Prostate gland (tissue), 2 donors: ENCODE measurements at regions of chr12 and their contacts with region 1.

Region 1: DNA sequence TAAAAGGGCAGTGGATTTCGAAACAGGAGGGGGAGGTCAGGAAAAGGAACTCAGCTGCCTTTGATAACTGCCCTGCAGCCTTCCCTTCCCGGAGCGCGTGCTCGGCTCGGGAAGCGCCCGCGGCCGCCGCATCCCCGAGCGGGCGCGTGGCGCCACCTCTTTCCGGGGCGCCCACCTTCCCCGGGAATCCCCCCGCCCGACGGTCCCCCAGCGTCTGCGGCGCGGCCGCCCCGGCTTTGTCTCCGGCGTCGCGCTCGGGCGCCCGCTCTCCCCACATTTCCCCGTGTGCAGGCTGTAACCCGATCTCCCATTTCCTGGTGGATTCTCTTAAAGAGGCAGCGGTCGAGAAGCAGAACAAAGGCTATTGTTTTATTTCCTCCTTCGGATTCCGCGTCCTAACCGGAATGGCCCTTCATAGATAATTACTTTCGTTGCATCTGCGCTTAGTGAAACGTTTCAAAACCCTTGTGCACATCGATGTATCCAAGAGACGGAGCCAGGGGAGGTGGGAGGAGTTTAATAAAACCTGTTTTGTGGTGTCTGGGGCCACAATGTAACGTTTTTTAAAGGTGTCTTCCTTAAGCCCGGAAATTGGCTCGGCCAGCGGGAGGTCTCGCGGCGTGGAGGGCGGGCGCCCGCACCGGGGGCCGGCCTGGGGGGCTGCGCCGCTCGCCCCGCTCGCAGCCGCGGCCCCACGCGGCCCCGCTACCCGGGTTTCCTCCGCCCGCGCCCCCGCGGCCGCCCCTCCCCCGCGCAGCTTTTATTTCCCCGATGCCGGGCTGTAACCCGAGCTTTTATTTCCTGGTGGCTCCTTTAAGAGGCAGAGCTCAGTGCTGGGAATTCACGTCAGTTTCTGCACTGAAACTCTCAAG is at the start of gene ETV6:
- DNase-seq: peak; percentile 76
- H3K4me3 ChIP-seq: peak within 1 kb of the TSS; percentile 73 to 77
- H3K27ac ChIP-seq: peak within 1 kb of the TSS; percentile 93 to 94
- H3K4me1 ChIP-seq: peaks cover 2% of the 10 kb centered on the region
- H3K27me3 ChIP-seq: no peaks in the 10 kb centered on the region
- CTCF ChIP-seq: no peak
- POLR2A ChIP-seq: peak; percentile 17
- total RNA-seq, gene ETV6: 26.7 to 33.6 TPM

Region 2: GRCh38 chr12:11730299-11731041 is 81.4 kb after region 1 on chr12:
- intact Hi-C with region 1: no loop called
- DNase-seq: peak; percentile 84
- H3K4me3 ChIP-seq: no peak overlapping the region
- H3K27ac ChIP-seq: peak overlapping the region; percentile 49 to 68
- H3K4me1 ChIP-seq: no peaks in the 10 kb centered on the region
- H3K27me3 ChIP-seq: no peaks in the 10 kb centered on the region
- CTCF ChIP-seq: no peak
- POLR2A ChIP-seq: no peak

Region 3: GRCh38 chr12:11765817-11766794 is 117.0 kb after region 1 on chr12:
- intact Hi-C with region 1: loop called (anchors 5 kb)
- DNase-seq: no peak
- H3K4me3 ChIP-seq: no peak overlapping the region
- H3K27ac ChIP-seq: peak overlapping the region; percentile 60 to 63
- H3K4me1 ChIP-seq: no peaks in the 10 kb centered on the region
- H3K27me3 ChIP-seq: no peaks in the 10 kb centered on the region
- CTCF ChIP-seq: no peak
- POLR2A ChIP-seq: no peak

Region 4: DNA sequence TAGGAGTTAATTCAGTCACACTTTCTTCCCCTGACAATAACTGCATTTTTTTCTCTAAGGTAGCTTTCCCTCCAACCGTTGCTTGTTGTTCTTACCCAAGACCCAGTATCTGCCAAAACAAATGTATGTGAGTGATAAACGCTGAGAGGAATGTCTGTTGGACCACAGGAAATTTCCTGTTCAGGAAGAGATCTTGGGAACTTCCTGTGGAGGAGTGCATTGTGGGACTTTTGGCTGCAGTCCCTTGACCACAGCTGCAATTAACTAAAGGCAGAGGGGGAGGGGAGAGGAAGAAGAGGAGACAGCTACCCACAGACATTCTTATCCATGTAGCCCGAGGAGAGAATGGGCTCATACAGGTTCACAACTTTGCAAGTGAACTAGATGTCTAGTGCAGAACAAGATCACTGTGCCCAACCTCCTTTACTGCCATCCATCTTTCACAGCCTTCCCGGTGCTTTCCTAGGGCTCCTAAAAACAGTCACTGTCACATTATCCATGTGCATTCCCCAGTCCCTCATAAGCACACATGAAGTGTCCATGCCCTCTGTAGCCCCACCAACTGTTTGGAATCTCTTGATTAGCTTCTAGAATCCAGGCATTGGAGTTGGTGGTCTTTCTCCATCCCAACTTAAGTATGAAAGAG is 149.9 kb after region 1 on chr12:
- intact Hi-C with region 1: loop called (anchors 10 kb)
- DNase-seq: no peak
- H3K4me3 ChIP-seq: no peak overlapping the region
- H3K27ac ChIP-seq: no peak overlapping the region
- H3K4me1 ChIP-seq: peaks cover 7% of the 10 kb centered on the region
- H3K27me3 ChIP-seq: no peaks in the 10 kb centered on the region
- CTCF ChIP-seq: no peak
- POLR2A ChIP-seq: no peak

Region 5: GRCh38 chr12:11884706-11885105 is 235.6 kb after region 1 on chr12:
- intact Hi-C with region 1: loop called (anchors 5 kb)
- DNase-seq: no peak
- H3K4me3 ChIP-seq: no peak overlapping the region
- H3K27ac ChIP-seq: peak overlapping the region; percentile 60 to 69
- H3K4me1 ChIP-seq: peaks cover 3% of the 10 kb centered on the region
- H3K27me3 ChIP-seq: no peaks in the 10 kb centered on the region
- CTCF ChIP-seq: no peak
- POLR2A ChIP-seq: no peak

Region 6: DNA sequence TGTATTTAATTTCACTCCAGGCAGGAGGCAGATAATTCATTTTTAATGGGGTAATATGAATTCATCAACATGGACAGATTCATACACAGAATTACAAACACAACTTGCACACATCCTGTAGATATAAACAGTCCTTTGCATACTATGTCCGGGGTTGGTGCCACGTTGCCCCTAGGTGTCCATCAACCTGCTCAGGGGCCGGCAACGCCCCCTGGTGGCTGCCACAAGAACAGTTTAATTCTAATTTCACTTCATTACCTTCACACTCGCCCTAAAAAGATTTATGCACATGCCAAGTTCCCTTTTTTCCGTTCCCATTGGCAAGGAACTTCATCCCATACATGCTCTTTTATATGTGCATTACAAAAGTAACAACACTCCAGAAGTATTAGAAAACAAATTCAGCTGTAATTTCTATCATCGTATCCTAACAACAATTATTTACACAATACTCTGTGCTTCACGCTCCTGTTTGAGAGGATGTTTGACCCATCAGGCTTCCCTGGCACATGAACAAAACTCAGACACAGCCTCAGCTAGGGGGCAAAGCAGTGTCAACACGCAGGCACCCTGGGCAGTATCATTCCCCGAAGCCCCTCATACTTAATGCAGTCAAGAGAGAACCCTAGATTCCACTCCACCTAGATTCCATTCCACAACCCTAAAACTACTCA is 685.4 kb after region 1 on chr12:
- intact Hi-C with region 1: loop called (anchors 10 kb)
- DNase-seq: no peak
- H3K4me3 ChIP-seq: no peak overlapping the region
- H3K27ac ChIP-seq: no peak overlapping the region
- H3K4me1 ChIP-seq: peaks cover 5% of the 10 kb centered on the region
- H3K27me3 ChIP-seq: no peaks in the 10 kb centered on the region
- CTCF ChIP-seq: peak; percentile 24 to 74 (median 58)
- POLR2A ChIP-seq: no peak